ENCODE measurements at regions of chr5 and their contacts with region 1.

Region 1: DNA sequence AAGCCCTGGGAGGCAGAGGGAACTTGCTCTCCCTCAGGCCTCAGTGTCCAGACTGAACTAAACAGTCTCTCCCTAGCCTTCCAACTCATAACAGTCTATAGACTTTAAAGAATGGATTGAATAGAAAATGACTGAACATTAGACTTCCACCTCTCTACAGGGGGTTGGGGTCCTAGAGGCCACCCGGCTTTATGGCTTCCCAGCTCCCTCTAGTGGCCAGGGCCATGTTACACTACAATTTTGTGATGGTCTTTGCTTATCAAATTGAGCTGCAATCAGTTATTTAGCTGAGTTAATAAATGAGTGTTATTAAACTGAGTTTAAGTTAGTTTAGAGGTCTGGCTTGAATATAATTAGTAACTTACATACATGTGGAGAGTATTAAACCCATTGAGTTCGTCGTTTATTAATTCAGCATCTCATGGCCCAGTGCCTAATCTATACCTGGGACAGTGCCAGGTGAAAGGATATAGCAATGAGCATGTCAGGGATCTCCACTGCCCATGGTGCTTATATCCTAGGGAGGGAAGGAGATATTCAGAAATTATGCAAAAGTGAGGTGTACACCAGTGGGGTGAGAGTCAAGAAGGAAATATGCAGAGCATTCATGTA is 105.2 kb downstream of the SH3TC2 start:
- DNase-seq: peak; percentile 74
- ATAC-seq: peak; percentile 73
- H3K4me3 Mint-ChIP-seq: no peak overlapping the region
- H3K27ac Mint-ChIP-seq: no peak overlapping the region
- H3K4me1 Mint-ChIP-seq: no peaks in the 10 kb centered on the region
- H3K27me3 Mint-ChIP-seq: peaks cover 2% of the 10 kb centered on the region
- CTCF ChIP-seq: peak; percentile 97

Region 2: GRCh38 chr5:148107608-148108007 is 850.1 kb before region 1 on chr5:
- CTCF ChIA-PET with region 1: no interaction called
- POLR2A ChIA-PET with region 1: no interaction called
- intact Hi-C with region 1: no loop called
- DNase-seq: no peak
- ATAC-seq: no peak
- H3K4me3 Mint-ChIP-seq: no peak overlapping the region
- H3K27ac Mint-ChIP-seq: no peak overlapping the region
- H3K4me1 Mint-ChIP-seq: no peaks in the 10 kb centered on the region
- H3K27me3 Mint-ChIP-seq: no peaks in the 10 kb centered on the region
- CTCF ChIP-seq: no peak

Region 3: DNA sequence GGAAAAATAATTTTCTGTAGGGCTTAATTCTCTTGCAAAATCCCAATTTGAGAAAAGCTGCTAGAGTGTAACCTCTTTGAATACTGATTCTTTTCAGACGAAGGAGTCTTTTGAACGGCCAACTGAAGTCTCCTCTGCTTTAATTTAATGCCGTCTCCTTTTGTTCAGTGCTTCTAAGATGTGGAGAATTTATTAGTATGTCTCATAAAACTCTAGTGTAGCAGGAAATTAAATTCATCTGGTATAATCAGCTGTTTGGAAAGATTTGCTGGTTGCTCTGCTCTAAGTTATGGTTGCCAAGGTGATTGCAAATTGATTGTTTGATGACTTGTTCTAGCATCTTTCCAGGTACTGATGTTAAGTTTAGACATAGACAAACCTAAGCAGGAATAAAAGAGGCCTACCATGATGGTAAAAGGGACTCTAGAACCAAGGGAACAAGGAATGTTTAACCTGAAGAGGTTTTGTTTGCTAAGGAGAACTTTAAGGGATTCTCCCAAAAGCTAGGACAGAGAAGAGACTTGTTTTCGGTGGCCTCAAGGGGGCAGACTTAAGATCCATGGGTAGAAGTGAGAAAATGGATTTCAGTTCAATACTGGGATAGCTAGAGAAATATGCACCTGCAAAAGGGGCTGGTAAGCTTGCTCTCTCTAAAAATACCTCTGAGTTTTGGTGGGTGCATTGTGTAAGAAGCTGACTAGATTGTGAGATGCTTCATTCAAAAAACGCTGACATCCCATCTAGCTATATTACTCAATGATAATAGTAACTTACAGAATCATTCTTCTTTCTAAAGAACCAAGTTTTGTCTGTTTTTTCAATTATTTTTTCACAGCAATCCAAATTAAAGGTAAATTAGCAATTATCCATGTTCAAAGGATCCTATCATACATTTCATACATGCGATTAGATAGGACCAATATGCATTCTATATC is 137.0 kb before region 1 on chr5:
- CTCF ChIA-PET with region 1: interaction called, 30 read pairs
- POLR2A ChIA-PET with region 1: no interaction called
- intact Hi-C with region 1: loop called (anchors 5 kb)
- DNase-seq: no peak
- ATAC-seq: peak; percentile 53
- H3K4me3 Mint-ChIP-seq: no peak overlapping the region
- H3K27ac Mint-ChIP-seq: no peak overlapping the region
- H3K4me1 Mint-ChIP-seq: peaks cover 4% of the 10 kb centered on the region
- H3K27me3 Mint-ChIP-seq: peaks cover 5% of the 10 kb centered on the region
- CTCF ChIP-seq: peak; percentile 65

Region 4: GRCh38 chr5:148839960-148840359 is 117.7 kb before region 1 on chr5:
- CTCF ChIA-PET with region 1: interaction called, 11 read pairs
- POLR2A ChIA-PET with region 1: no interaction called
- intact Hi-C with region 1: no loop called
- DNase-seq: peak; percentile 31
- ATAC-seq: peak; percentile 46
- H3K4me3 Mint-ChIP-seq: no peak overlapping the region
- H3K27ac Mint-ChIP-seq: no peak overlapping the region
- H3K4me1 Mint-ChIP-seq: peaks cover 24% of the 10 kb centered on the region
- H3K27me3 Mint-ChIP-seq: peaks cover 2% of the 10 kb centered on the region
- CTCF ChIP-seq: no peak

Region 5: DNA sequence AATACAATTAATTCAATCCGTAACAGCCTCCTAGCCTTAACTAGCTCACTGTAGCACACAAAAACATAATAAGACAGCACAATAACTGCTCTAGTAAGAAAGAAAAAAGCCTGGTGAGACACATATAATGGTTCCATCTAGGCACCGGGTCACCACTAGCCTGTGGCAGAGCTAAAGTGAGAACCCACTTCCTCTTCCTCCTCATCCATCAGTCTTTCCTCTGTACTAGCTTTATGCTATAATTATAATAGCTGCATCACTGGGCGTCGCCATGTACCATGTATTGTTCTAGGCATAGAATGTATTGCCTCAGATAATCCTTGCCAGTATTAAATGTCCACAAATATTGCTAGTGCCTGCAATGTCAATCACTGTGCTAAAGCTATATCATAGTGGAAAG is 108.2 kb before region 1 on chr5:
- CTCF ChIA-PET with region 1: interaction called, 14 read pairs
- POLR2A ChIA-PET with region 1: no interaction called
- intact Hi-C with region 1: no loop called
- DNase-seq: peak; percentile 60
- ATAC-seq: peak; percentile 70
- H3K4me3 Mint-ChIP-seq: no peak overlapping the region
- H3K27ac Mint-ChIP-seq: peak overlapping the region; percentile 96
- H3K4me1 Mint-ChIP-seq: peaks cover 51% of the 10 kb centered on the region
- H3K27me3 Mint-ChIP-seq: no peaks in the 10 kb centered on the region
- CTCF ChIP-seq: no peak

Region 6: GRCh38 chr5:148932355-148932935 is 25.3 kb before region 1 on chr5:
- CTCF ChIA-PET with region 1: interaction called, 10 read pairs
- POLR2A ChIA-PET with region 1: no interaction called
- intact Hi-C with region 1: no loop called
- DNase-seq: no peak
- ATAC-seq: no peak
- H3K4me3 Mint-ChIP-seq: no peak overlapping the region
- H3K27ac Mint-ChIP-seq: no peak overlapping the region
- H3K4me1 Mint-ChIP-seq: no peaks in the 10 kb centered on the region
- H3K27me3 Mint-ChIP-seq: peaks cover 3% of the 10 kb centered on the region
- CTCF ChIP-seq: no peak

Region 7: GRCh38 chr5:148970228-148970627 is 12.5 kb after region 1 on chr5:
- CTCF ChIA-PET with region 1: interaction called, 19 read pairs
- POLR2A ChIA-PET with region 1: no interaction called
- intact Hi-C with region 1: no loop called
- DNase-seq: no peak
- ATAC-seq: no peak
- H3K4me3 Mint-ChIP-seq: no peak overlapping the region
- H3K27ac Mint-ChIP-seq: no peak overlapping the region
- H3K4me1 Mint-ChIP-seq: no peaks in the 10 kb centered on the region
- H3K27me3 Mint-ChIP-seq: peaks cover 11% of the 10 kb centered on the region
- CTCF ChIP-seq: no peak

Region 8: DNA sequence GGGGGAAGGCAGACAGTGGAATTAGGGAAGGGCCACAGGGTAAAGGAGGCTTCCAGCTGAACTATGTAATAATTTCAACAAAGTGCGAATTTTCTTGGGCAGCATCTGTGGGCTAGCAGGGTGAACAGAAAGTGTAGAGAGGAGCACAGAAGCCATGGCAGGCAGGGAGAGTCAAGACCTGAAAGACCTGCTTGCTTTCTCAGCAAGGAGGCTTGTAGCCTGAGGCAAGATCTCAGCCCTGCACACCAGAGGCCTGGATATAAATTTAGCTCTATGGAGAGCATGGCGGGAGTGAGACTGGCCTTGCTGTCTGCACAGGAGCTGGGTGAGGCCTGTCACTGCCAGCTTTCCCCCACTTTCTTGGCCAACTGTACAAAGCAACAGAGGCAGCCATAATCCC is 137.3 kb after region 1 on chr5:
- CTCF ChIA-PET with region 1: no interaction called
- POLR2A ChIA-PET with region 1: no interaction called
- intact Hi-C with region 1: no loop called
- DNase-seq: no peak
- ATAC-seq: no peak
- H3K4me3 Mint-ChIP-seq: no peak overlapping the region
- H3K27ac Mint-ChIP-seq: no peak overlapping the region
- H3K4me1 Mint-ChIP-seq: no peaks in the 10 kb centered on the region
- H3K27me3 Mint-ChIP-seq: peaks cover 10% of the 10 kb centered on the region
- CTCF ChIP-seq: no peak

Region 9: GRCh38 chr5:149274939-149275338 is 317.2 kb after region 1 on chr5:
- CTCF ChIA-PET with region 1: no interaction called
- POLR2A ChIA-PET with region 1: no interaction called
- intact Hi-C with region 1: no loop called
- DNase-seq: no peak
- ATAC-seq: no peak
- H3K4me3 Mint-ChIP-seq: no peak overlapping the region
- H3K27ac Mint-ChIP-seq: no peak overlapping the region
- H3K4me1 Mint-ChIP-seq: peaks cover 6% of the 10 kb centered on the region
- H3K27me3 Mint-ChIP-seq: peaks cover 23% of the 10 kb centered on the region
- CTCF ChIP-seq: no peak